ENCODE measurements at regions of chr1 and their contacts with region 1.

Region 1: DNA sequence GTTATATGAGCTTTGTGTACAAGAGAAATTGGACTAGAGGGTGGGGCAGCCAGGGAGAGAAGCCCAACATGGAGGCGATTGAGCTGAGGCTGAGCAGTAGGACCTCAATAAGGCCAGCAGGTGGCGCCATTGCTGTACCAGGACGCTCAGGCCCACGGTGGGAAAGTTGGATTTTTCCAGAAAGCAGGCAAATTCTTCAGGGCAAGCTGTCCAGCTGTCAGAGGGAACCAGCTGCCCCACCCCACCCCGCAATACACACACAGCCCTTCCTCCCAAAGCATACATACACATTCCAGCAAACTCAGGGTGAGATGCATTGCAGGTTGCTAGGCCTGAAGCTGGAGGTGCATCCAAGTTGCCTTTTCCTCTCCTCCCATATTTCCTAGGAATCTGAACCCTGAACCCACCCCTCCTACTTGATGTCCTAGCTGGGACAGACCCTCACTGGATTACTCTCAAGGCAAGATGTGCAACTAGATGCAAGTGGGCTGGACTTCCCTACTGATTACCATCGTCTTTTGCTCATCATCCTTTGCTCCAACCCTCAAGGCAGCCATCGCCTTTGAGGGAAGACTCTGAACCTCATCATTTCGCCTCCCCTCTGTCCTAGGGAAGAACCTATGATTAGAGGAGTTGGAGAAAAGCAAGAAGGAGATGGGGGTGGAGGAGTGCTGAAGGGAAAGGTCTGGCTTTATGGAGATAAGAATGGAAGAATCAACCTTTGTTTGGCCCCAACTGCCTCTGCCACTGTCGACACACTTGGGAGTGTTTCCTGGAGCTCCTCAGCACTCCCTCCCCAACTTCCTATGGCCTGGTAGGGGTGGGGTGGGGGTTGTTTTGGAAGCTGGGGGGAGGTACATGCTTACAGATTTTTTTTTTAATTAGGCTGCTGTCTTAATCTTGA is 25.5 kb downstream of the CD34 start:
- DNase-seq: peak; percentile 58 to 79 (median 61)
- H3K4me3 ChIP-seq: no peak overlapping the region
- H3K4me3 Mint-ChIP-seq: peak overlapping the region in 3 of 7 donors; percentile 10 to 36 (median 21)
- H3K27ac ChIP-seq: no peak overlapping the region
- H3K27ac Mint-ChIP-seq: peak overlapping the region in 7 of 8 donors; percentile 59 to 96 (median 79)
- H3K4me1 ChIP-seq: peaks cover 28% of the 10 kb centered on the region
- H3K4me1 Mint-ChIP-seq: peaks cover 33 to 38% (median 37%) of the 10 kb centered on the region in 3 donors
- H3K27me3 ChIP-seq: no peaks in the 10 kb centered on the region
- H3K27me3 Mint-ChIP-seq: peaks cover 8 to 18% of the 10 kb centered on the region in 2 donors

Region 2: GRCh38 chr1:207644852-207645634 is 240.3 kb before region 1 on chr1 and contains the start of gene CR1L:
- CTCF ChIA-PET with region 1: no interaction called
- POLR2A ChIA-PET with region 1: no interaction called
- DNase-seq: peak; percentile 37 to 76 (median 65)
- H3K4me3 ChIP-seq: peak within 1 kb of the TSS; percentile 64
- H3K4me3 Mint-ChIP-seq: peak within 1 kb of the TSS; percentile 67 to 89 (median 73)
- H3K27ac ChIP-seq: peak within 1 kb of the TSS; percentile 64
- H3K27ac Mint-ChIP-seq: peak within 1 kb of the TSS in 1 of 8 donors; percentile 39
- H3K4me1 ChIP-seq: peaks cover 5% of the 10 kb centered on the region
- H3K4me1 Mint-ChIP-seq: peaks cover 7 to 14% (median 9%) of the 10 kb centered on the region in 3 donors
- H3K27me3 ChIP-seq: no peaks in the 10 kb centered on the region
- H3K27me3 Mint-ChIP-seq: peaks cover 22 to 35% of the 10 kb centered on the region in 2 donors
- total RNA-seq, gene CR1L: not detected

Region 3: DNA sequence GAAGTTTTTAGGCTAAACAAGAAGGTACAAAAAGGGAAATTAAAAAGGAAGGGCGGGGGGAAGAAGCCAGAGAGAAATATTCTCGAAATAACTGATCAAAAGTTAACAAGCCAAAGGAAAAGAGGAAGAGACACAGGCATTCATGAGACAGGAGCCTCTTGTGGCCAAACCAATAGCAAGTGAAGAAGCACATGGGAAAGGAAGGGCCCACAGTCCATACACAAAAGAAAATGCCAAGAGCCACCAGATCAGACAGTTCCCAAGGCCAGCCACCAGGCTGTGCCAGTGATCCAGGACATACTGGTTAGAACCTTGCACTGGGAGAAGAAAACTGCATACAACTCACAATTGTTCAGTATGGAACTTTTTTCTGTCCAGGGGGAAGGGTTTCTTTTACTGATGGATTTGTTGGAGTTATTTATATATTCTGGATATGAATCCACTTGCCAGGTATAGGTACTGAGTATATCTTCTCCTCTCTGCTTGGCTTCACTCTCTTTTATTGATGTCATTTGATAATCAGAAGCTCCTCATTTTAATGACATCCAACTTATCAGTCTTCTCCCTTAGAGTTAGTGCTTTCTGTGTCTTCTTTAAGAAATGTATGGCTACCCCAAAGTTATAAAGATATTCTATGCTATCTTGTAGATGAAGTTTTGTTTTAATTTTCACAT is 56.8 kb before region 1 on chr1:
- CTCF ChIA-PET with region 1: interaction called, 39 read pairs
- POLR2A ChIA-PET with region 1: interaction called, 4 read pairs
- DNase-seq: peak; percentile 32 to 73 (median 47)
- H3K4me3 ChIP-seq: no peak overlapping the region
- H3K4me3 Mint-ChIP-seq: no peak overlapping the region
- H3K27ac ChIP-seq: peak overlapping the region; percentile 48
- H3K27ac Mint-ChIP-seq: peak overlapping the region; percentile 65 to 98 (median 86)
- H3K4me1 ChIP-seq: peaks cover 88% of the 10 kb centered on the region
- H3K4me1 Mint-ChIP-seq: peaks cover 84 to 100% (median 98%) of the 10 kb centered on the region in 3 donors
- H3K27me3 ChIP-seq: no peaks in the 10 kb centered on the region
- H3K27me3 Mint-ChIP-seq: peaks cover 4% of the 10 kb centered on the region in 2 donors

Region 4: DNA sequence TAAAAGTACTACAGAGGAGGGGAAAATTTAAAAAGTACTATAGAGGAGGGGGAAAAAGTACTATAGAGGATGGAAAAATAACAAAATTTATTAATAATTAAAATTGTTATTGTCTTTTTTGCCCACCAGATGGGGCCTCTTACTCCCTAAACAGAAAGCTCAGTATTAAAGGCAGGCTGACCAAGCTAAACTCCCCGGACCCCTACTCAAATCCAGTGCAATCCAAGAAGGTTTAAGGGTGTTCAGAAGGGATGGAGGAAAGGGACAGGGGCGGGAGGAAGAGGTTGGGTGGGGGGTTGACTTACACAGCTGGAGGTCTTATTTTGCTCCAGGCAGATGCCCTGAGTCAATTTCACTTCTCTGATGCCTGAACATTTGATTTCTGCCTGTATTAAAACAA is 11.8 kb after region 1 on chr1:
- CTCF ChIA-PET with region 1: interaction called, 62 read pairs
- POLR2A ChIA-PET with region 1: no interaction called
- DNase-seq: no peak
- H3K4me3 ChIP-seq: no peak overlapping the region
- H3K4me3 Mint-ChIP-seq: no peak overlapping the region
- H3K27ac ChIP-seq: no peak overlapping the region
- H3K27ac Mint-ChIP-seq: no peak overlapping the region
- H3K4me1 ChIP-seq: no peaks in the 10 kb centered on the region
- H3K4me1 Mint-ChIP-seq: no peaks in the 10 kb centered on the region
- H3K27me3 ChIP-seq: no peaks in the 10 kb centered on the region
- H3K27me3 Mint-ChIP-seq: no peaks in the 10 kb centered on the region

Region 5: GRCh38 chr1:207903767-207904166 is 18.4 kb after region 1 on chr1:
- CTCF ChIA-PET with region 1: interaction called, 62 read pairs
- POLR2A ChIA-PET with region 1: interaction called, 3 read pairs
- DNase-seq: no peak
- H3K4me3 ChIP-seq: no peak overlapping the region
- H3K4me3 Mint-ChIP-seq: no peak overlapping the region
- H3K27ac ChIP-seq: no peak overlapping the region
- H3K27ac Mint-ChIP-seq: no peak overlapping the region
- H3K4me1 ChIP-seq: no peaks in the 10 kb centered on the region
- H3K4me1 Mint-ChIP-seq: no peaks in the 10 kb centered on the region
- H3K27me3 ChIP-seq: no peaks in the 10 kb centered on the region
- H3K27me3 Mint-ChIP-seq: peaks cover 2 to 15% of the 10 kb centered on the region in 2 donors

Region 6: GRCh38 chr1:208065862-208066261 is 180.5 kb after region 1 on chr1:
- CTCF ChIA-PET with region 1: no interaction called
- POLR2A ChIA-PET with region 1: no interaction called
- DNase-seq: no peak
- H3K4me3 ChIP-seq: no peak overlapping the region
- H3K4me3 Mint-ChIP-seq: no peak overlapping the region
- H3K27ac ChIP-seq: no peak overlapping the region
- H3K27ac Mint-ChIP-seq: no peak overlapping the region
- H3K4me1 ChIP-seq: no peaks in the 10 kb centered on the region
- H3K4me1 Mint-ChIP-seq: no peaks in the 10 kb centered on the region
- H3K27me3 ChIP-seq: no peaks in the 10 kb centered on the region
- H3K27me3 Mint-ChIP-seq: peaks cover 1 to 2% of the 10 kb centered on the region in 2 donors